ENCODE measurements at regions of chr10 and their contacts with region 1.

Region 1: GRCh38 chr10:126504063-126504739 is 115.9 kb upstream of the ADAM12 start:
- DNase-seq: peak in 4 of 10 donors; percentile 10 to 88 (median 26)

Region 2: DNA sequence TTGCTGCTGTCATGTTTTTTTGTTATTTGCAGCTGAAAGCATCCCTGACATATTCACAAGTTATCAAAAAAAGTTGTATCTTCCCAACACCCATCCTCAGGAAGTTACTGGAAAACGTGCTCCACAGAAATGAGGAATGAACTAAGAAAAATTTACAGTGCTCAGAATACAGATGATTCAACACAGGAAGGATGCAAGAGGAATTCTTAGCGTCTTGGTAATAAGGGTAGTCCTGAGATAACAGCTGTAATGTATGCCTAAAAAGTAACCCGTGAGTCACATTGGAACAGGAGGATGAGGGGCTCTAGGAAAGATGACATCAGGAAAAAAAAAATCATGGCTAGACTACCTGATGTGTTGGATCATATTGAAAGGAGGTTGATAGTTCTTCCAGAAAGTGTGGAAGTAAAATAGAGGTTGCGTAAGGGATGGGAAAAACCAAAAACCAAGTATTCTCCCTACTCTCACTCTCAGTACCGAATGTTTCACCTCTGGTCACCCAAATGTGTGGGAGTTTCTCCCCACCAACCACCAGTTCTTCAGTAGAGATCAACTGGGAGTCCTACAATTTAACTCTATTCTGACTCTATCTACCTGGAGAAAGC is 119.8 kb before region 1 on chr10:
- intact Hi-C with region 1: no loop called
- DNase-seq: no peak

Region 3: DNA sequence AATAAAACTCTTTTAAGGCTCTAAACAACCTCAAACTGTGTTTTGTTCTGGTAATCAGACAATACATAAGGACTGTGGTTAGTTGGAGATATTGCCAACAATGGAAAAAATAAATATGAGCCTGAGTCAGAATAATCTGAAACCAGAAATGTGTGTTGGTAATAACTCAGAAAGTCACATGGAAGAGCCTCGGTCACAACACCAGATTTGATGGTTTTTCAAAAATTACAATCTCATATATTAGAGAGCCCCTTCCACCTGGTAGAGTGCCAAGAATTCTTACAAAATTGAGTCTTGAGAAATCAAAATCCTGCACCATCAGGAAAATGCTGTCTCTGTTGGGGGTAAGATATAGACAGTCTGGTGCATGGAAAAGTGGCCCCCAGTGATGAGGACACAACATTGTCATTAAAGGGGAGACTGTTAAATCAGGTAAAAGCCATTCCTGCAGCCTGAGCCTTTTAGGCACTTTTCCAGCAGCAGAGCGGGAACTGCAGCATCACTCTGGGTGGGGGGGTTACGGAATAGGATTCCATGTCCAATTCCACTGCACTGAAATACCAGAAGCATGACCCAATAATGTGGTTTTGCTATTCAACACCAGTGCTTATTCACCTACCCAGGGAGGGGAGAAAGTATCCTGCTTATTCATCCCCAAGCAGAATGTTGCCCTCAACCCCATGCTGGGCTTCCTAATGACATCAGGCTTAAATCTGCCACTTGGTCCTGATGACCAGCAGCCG is 106.4 kb before region 1 on chr10:
- intact Hi-C with region 1: loop called (anchors 10 kb)
- DNase-seq: no peak

Region 4: DNA sequence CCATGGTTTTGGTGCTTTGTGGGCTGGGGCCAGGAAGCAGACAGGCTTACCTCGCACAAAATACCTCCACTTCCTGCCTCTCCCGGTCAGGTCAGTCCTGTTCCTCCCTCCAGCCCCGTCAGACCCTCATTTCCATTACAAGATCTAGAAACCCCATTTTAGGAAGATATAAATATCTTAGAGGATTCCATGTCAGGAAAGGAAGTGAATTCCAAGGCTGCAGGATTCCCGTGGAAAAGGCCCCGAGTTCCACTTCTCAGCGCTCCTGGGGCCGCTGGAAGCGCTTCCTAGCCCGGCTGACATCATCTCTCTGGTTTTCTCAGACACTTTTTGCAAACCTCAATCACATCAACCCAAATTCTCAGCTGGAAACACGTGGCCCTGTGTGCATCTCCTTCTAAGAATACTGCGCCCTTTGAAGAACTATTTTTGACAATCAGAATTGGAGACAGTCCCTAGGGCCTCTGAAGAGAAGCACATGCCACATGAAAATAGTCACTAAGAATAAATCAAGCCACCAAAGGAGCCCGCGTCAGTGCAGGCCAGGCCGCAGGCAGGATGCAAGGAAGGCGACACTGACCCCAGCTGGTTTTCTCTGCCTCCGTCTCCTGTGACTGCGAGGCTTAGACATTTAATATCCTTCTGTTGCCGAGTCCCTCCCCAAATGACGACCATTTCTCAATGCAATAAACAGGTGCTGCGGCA is 28.1 kb before region 1 on chr10:
- intact Hi-C with region 1: no loop called
- DNase-seq: peak in 1 of 10 donors; percentile 62

Measured in posterior cingulate gyrus (tissue), 11 donors.